ENCODE measurements at regions of chr1 and their contacts with region 1.

Region 1: GRCh38 chr1:1115786-1116700 is at the start of gene C1orf159:
- DNase-seq: peak; percentile 99
- ATAC-seq: peak; percentile 99
- total RNA-seq, gene C1orf159: 5.3 to 6.1 TPM

Region 2: GRCh38 chr1:958823-959729 is 157.0 kb before region 1 on chr1 and contains the start of gene NOC2L:
- intact Hi-C with region 1: no loop called
- DNase-seq: peak; percentile 94
- ATAC-seq: peak; percentile 95 to 96
- total RNA-seq, gene NOC2L: 38.1 to 48.7 TPM

Region 3: DNA sequence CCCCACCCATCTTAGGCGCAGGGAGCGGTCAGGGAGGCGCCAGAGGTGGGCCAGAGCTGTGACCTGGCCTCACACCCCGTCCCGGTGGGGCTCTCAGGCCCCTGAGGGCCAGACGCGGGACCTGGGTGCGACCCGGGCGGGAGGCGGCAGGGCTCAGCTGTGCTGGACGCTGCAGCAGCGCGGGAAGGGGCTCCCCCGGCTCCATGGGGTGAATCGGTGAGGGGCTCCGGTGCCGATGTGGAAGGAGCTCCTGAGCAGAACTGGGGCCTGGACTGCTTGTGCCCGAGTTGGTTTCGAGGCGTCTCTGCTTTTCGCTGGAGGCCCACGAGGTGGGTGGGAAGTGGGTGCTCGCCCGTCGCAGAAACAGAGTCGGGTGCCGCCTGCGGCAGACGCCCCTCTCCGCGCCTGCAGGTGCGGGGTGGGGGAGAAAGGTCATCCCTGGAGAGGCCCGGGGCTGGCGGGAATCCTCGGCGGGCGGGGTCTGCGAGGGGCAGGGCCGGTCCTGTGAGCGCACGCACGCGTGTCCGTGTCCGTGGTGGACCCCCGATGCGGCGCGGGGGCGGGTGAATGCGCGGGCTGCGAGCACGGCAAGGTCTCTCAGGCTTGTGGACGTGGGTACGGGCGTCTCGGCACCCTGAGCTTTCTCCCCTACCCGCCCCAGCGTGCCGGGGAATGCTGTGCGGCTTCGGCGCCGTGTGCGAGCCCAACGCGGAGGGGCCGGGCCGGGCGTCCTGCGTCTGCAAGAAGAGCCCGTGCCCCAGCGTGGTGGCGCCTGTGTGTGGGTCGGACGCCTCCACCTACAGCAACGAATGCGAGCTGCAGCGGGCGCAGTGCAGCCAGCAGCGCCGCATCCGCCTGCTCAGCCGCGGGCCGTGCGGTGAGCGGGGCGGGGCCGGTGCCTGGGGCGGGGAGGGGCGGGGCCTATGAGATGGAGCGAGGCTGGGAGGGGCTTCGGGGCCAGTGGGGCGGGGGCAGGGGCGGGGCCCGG is 75.7 kb before region 1 on chr1:
- intact Hi-C with region 1: no loop called
- DNase-seq: peak; percentile 77
- ATAC-seq: peak; percentile 86 to 89

Region 4: DNA sequence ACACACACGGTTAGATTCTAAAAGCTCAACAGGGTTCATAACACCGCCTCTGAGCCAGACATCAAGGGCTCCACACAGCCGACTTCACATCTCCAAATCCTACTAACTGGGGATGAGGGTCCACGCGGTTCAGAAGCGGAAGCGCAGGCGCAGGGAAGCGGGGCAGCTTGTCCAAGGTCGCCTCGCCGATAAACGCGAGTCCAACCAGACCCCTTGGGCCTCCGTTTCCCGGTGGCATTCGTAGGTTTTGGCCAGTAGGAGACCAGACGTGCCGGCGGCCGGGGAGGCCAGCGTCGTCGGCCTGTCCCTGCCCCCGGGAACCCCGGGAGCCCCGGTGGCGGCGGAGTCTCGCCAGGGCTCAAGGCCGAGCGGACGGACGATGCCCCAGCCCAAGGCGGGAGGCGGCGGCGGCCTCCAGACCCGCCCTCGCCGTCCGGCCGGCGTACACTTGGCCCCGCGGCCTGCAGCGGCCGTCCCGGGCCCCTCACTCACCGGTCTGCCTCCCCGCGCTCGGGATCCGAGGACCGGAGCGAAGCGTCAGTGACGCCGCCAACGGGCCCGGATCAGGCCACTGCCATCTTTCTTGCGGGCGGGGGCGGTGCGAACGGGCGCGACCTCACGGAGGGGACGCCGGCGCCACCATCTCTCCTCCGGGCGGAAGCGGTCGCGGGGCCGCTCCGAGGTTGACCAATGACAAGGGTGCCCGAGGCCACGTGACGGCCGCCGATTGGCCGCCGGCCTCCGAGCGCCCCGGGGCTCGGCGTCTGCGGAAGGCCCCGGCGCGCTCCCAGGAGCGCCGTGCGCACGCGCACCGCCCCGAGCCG is 115.6 kb after region 1 on chr1 and contains the start of gene SDF4:
- intact Hi-C with region 1: loop called in 1 of 2 experiments (anchors 5 kb)
- DNase-seq: peak; percentile 98
- ATAC-seq: peak; percentile 96 to 97
- total RNA-seq, gene SDF4: 132 to 173 TPM

Region 5: GRCh38 chr1:1246577-1247340 is 130.7 kb after region 1 on chr1 and contains the start of gene C1QTNF12:
- intact Hi-C with region 1: loop called in 1 of 2 experiments (anchors 5 kb)
- DNase-seq: no peak
- ATAC-seq: peak in 1 of 2 donors; percentile 12
- total RNA-seq, gene C1QTNF12: 1.5 TPM in 1 of 2 donors, not detected in the other

Measured in left cardiac atrium (tissue), 4 donors.